ENCODE measurements at regions of chr4 and their contacts with region 1.

Region 1: DNA sequence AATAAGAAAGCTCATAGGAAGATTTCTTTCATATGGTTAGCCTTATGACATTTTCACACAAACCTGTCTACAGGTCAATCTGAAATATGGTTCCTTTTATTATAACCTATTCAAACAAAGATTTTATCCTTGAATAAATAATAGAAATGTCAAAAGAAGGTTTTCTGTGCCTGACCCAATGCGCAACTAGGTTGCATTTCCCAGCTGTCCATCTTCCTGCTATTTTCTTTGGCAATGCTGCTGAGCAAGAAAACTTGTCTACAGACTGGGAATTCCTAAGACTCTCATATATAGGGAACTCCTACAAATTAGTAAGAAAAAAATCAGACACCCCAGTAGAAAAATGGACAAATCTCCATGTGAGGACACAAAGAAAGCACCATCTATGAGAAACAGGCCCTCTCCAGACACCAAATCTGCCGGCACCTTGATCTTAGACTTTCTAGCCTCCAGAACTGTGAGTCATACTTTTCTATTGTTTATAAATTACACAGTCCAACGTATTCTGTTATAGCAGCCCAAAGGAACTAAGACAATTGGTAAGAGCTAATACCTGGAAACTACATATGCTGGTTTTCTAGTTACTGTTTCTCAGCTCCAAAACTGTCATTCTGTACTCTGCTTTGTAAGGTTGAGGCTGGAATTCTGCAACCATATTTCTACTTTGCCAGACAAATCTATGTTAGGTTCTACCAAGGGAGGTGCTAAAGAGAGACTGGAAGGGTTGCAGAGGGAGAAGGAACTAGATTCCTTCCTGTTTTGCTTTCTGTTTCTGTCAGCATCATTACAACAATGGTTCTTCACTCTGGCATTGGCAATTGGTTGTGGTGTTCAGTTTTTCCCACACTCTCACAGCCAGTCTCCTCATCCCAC is 35.8 kb upstream of the FAM241A start:
- DNase-seq: peak in 1 of 2 experiments; percentile 71
- H3K4me3 ChIP-seq: no peak overlapping the region
- H3K27ac ChIP-seq: peak overlapping the region; percentile 25; the same call in 1 of the 2 replicates
- H3K4me1 ChIP-seq: peaks cover 47% of the 10 kb centered on the region
- H3K27me3 ChIP-seq: no peaks in the 10 kb centered on the region
- CTCF ChIP-seq: no peak

Region 2: DNA sequence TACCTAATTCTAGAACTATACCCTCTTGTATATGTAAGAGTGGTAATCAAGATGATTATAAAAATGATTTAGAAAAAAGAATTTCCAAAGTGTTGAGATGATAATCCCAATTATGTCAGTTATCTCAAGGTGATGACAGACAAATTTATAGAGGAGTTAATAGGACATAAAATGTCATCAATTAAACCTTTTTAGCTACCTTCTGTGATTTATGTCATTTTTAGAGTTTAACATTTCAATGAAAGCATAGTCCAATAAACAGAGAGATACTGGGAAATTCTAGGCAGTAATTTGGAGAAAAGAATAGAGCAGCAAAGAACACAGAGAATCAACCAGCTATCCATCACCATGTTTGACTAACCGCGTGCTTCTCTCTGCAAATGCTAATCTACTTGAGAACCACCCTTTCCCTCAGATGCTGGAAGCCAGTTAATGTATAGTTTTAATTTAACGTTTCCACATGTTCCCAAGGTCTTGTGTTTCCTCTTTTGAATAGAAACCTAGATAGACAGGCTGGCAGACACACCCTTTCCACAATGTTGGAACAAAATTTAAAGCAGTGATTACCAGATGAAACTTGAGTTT is 397.2 kb before region 1 on chr4:
- CTCF ChIA-PET with region 1: no interaction called
- POLR2A ChIA-PET with region 1: no interaction called
- intact Hi-C with region 1: no loop called
- DNase-seq: no peak
- H3K4me3 ChIP-seq: no peak overlapping the region
- H3K27ac ChIP-seq: no peak overlapping the region
- H3K4me1 ChIP-seq: no peaks in the 10 kb centered on the region; the same call in 1 of the 2 replicates
- H3K27me3 ChIP-seq: no peaks in the 10 kb centered on the region
- CTCF ChIP-seq: no peak

Region 3: GRCh38 chr4:112145326-112145819 is 36.0 kb after region 1 on chr4 and contains the start of gene FAM241A:
- CTCF ChIA-PET with region 1: no interaction called
- POLR2A ChIA-PET with region 1: no interaction called
- intact Hi-C with region 1: loop called (anchors 5 kb)
- DNase-seq: peak; percentile 62 to 80
- H3K4me3 ChIP-seq: peak within 1 kb of the TSS; percentile 89
- H3K27ac ChIP-seq: peak within 1 kb of the TSS; percentile 51
- H3K4me1 ChIP-seq: peaks cover 28% of the 10 kb centered on the region
- H3K27me3 ChIP-seq: no peaks in the 10 kb centered on the region
- CTCF ChIP-seq: no peak
- total RNA-seq, gene FAM241A: 0.78 and 1.4 TPM in 2 replicates